ENCODE measurements at regions of chr11 and their contacts with region 1.

Region 1: GRCh38 chr11:61627567-61628445 is 46.9 kb upstream of the SYT7 start:
- DNase-seq: peak; percentile 80 to 87
- H3K4me3 ChIP-seq: no peak overlapping the region
- H3K4me3 Mint-ChIP-seq: peak overlapping the region; percentile 70
- H3K27ac Mint-ChIP-seq: peak overlapping the region; percentile 95
- H3K4me1 ChIP-seq: peaks cover 39% of the 10 kb centered on the region
- H3K4me1 Mint-ChIP-seq: peaks cover 49% of the 10 kb centered on the region
- H3K27me3 ChIP-seq: no peaks in the 10 kb centered on the region
- H3K27me3 Mint-ChIP-seq: no peaks in the 10 kb centered on the region
- CTCF ChIP-seq: peak; percentile 90 to 95

Region 2: DNA sequence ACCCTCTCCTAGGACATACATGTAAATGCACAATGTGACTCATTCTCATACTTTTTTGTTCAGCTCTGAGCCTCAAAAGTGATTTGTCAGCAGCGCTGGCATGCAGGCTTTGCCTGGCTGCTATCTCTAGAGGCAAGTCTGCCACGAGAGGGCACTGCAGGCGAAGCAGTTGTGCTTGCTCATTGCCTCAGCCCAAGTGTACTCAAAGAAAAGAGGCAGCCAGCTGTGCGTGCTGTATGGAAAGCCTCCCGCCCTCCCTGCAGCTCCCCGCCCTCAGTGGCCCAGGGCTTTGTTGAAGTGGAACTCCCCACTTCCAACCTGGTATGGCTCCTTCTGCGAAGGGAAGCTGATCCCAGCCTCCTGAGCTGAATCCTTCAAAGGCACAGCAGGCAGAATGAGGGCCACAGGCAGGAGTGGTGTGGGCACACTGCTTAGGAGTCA is 181.6 kb before region 1 on chr11:
- CTCF ChIA-PET with region 1: interaction called, 5 read pairs
- POLR2A ChIA-PET with region 1: no interaction called
- intact Hi-C with region 1: loop called (anchors 1 kb)
- DNase-seq: peak; percentile 83 to 88
- H3K4me3 ChIP-seq: no peak overlapping the region
- H3K4me3 Mint-ChIP-seq: no peak overlapping the region
- H3K27ac Mint-ChIP-seq: no peak overlapping the region
- H3K4me1 ChIP-seq: no peaks in the 10 kb centered on the region
- H3K4me1 Mint-ChIP-seq: peaks cover 6% of the 10 kb centered on the region
- H3K27me3 ChIP-seq: no peaks in the 10 kb centered on the region
- H3K27me3 Mint-ChIP-seq: no peaks in the 10 kb centered on the region
- CTCF ChIP-seq: peak; percentile 79 to 91

Region 3: DNA sequence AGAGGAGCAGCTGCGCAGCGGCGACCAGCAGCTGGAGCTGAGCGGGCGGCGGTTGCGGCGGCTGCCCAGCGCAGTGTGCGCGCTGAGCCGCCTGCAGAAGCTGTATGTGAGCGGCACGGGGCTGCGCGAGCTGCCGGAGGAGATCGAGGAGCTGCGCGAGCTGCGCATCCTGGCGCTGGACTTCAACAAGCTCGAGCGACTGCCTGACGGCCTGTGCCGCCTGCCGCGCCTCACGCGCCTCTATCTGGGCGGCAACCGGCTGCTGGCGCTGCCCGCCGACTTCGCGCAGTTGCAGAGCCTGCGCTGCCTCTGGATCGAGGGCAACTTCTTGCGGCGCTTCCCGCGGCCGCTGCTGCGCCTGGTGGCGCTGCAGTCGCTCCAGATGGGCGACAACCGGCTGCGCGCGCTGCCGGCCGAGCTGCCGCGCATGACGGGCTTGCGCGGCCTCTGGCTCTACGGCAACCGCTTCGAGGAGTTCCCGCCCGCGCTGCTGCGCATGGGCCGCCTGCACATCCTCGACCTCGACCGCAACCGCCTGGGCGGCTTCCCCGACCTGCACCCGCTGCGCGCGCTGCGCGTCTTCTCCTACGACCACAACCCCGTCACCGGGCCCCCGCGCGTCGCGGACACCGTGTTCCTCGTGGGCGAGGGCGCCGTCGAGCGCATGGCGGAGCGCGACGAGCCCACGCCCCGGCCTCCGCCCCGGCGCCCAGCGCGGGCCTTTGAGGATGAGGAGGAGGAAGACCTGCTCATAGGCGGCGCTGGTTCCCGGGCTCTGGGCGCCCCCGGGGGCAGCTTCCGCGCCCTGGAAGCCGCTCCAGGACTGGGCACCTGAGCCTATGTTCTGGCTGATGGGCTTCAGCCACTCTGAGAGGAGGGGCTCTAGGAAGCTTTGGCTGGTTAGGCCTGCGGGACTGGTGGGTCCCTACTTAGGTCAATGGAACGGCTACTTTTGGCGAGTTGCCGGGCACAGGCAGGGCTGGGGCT is 118.5 kb before region 1 on chr11:
- CTCF ChIA-PET with region 1: interaction called, 4 read pairs
- POLR2A ChIA-PET with region 1: no interaction called
- intact Hi-C with region 1: loop called (anchors 2 kb)
- DNase-seq: peak; percentile 82 to 87
- H3K4me3 ChIP-seq: peak overlapping the region; percentile 52
- H3K4me3 Mint-ChIP-seq: peak overlapping the region; percentile 80
- H3K27ac Mint-ChIP-seq: no peak overlapping the region
- H3K4me1 ChIP-seq: peaks cover 37% of the 10 kb centered on the region
- H3K4me1 Mint-ChIP-seq: peaks cover 27% of the 10 kb centered on the region
- H3K27me3 ChIP-seq: no peaks in the 10 kb centered on the region
- H3K27me3 Mint-ChIP-seq: peaks cover 5% of the 10 kb centered on the region
- CTCF ChIP-seq: peak; percentile 59 to 71

Region 4: GRCh38 chr11:61532139-61533038 is 95.4 kb before region 1 on chr11:
- CTCF ChIA-PET with region 1: interaction called, 5 read pairs
- POLR2A ChIA-PET with region 1: no interaction called
- intact Hi-C with region 1: loop called (anchors 2 kb)
- DNase-seq: peak; percentile 67 to 73
- H3K4me3 ChIP-seq: no peak overlapping the region
- H3K4me3 Mint-ChIP-seq: no peak overlapping the region
- H3K27ac Mint-ChIP-seq: no peak overlapping the region
- H3K4me1 ChIP-seq: peaks cover 41% of the 10 kb centered on the region
- H3K4me1 Mint-ChIP-seq: peaks cover 25% of the 10 kb centered on the region
- H3K27me3 ChIP-seq: no peaks in the 10 kb centered on the region
- H3K27me3 Mint-ChIP-seq: no peaks in the 10 kb centered on the region
- CTCF ChIP-seq: peak; percentile 85 to 86

Region 5: GRCh38 chr11:61587521-61588453 is 40.0 kb before region 1 on chr11:
- CTCF ChIA-PET with region 1: interaction called, 19 read pairs
- POLR2A ChIA-PET with region 1: interaction called, 3 read pairs
- intact Hi-C with region 1: loop called (anchors 2 kb)
- DNase-seq: peak; percentile 87 to 89
- H3K4me3 ChIP-seq: peak overlapping the region; percentile 61
- H3K4me3 Mint-ChIP-seq: peak overlapping the region; percentile 72
- H3K27ac Mint-ChIP-seq: no peak overlapping the region
- H3K4me1 ChIP-seq: peaks cover 16% of the 10 kb centered on the region
- H3K4me1 Mint-ChIP-seq: peaks cover 9% of the 10 kb centered on the region
- H3K27me3 ChIP-seq: no peaks in the 10 kb centered on the region
- H3K27me3 Mint-ChIP-seq: no peaks in the 10 kb centered on the region
- CTCF ChIP-seq: peak; percentile 29 to 52

Region 6: DNA sequence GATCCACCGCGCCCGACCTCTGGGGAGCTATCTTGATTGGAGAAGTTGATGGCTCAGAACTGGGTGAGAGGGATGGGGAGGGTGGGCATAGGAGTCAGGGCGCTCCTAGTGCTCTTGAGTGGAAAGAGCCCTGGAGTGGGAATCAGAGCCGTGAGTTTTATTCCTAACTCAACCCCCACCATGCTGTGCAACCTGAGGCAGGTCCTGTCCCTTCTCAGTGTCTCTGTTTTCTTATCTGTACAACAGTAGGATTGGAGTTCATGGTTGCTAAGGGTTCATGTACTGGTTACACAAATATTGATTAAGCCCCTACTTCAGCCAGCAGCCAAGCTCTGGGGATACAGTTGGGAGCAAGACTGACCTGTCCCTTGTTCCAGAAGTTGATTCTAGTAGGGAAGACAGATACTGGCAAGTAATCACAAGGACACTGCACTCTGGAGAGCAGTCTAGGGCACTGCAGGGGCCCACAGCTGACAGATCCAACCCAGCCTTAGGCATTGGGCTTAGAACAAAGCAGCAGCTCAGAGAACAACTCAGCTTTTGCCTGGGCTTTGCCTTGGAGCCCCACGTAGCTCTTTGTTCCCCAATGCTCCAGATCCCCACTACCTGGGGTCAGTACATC is 40.0 kb after region 1 on chr11:
- CTCF ChIA-PET with region 1: no interaction called
- POLR2A ChIA-PET with region 1: interaction called, 3 read pairs
- intact Hi-C with region 1: loop called (anchors 5 kb)
- DNase-seq: peak; percentile 43 to 54
- H3K4me3 ChIP-seq: peak overlapping the region; percentile 47
- H3K4me3 Mint-ChIP-seq: peak overlapping the region; percentile 84
- H3K27ac Mint-ChIP-seq: peak overlapping the region; percentile 88
- H3K4me1 ChIP-seq: peaks cover 46% of the 10 kb centered on the region
- H3K4me1 Mint-ChIP-seq: peaks cover 21% of the 10 kb centered on the region
- H3K27me3 ChIP-seq: no peaks in the 10 kb centered on the region
- H3K27me3 Mint-ChIP-seq: no peaks in the 10 kb centered on the region
- CTCF ChIP-seq: peak; percentile 24 to 36

Measured in Caco-2 (cell line).